ENCODE measurements at regions of chr5 and their contacts with region 1.

Region 1: GRCh38 chr5:122101636-122102285 is 23.7 kb upstream of the LOX start:
- DNase-seq: peak; percentile 23
- ATAC-seq: peak; percentile 77
- H3K4me3 ChIP-seq: no peak overlapping the region
- H3K27ac ChIP-seq: no peak overlapping the region
- H3K4me1 ChIP-seq: no peaks in the 10 kb centered on the region
- H3K27me3 ChIP-seq: no peaks in the 10 kb centered on the region
- CTCF ChIP-seq: peak; percentile 60
- EP300 ChIP-seq: no peak
- POLR2A ChIP-seq: no peak
- RAD21 ChIP-seq: no peak

Region 2: GRCh38 chr5:121630402-121630801 is 471.4 kb before region 1 on chr5:
- CTCF ChIA-PET with region 1: no interaction called
- POLR2A ChIA-PET with region 1: no interaction called
- in situ Hi-C with region 1: no loop called
- intact Hi-C with region 1: loop called (anchors 5 kb)
- DNase-seq: peak; percentile 18
- ATAC-seq: peak; percentile 85
- H3K4me3 ChIP-seq: no peak overlapping the region
- H3K27ac ChIP-seq: no peak overlapping the region
- H3K4me1 ChIP-seq: no peaks in the 10 kb centered on the region
- H3K27me3 ChIP-seq: no peaks in the 10 kb centered on the region
- CTCF ChIP-seq: peak; percentile 66
- EP300 ChIP-seq: no peak
- POLR2A ChIP-seq: no peak
- RAD21 ChIP-seq: no peak

Region 3: GRCh38 chr5:121681229-121681855 is 420.4 kb before region 1 on chr5:
- CTCF ChIA-PET with region 1: no interaction called
- POLR2A ChIA-PET with region 1: no interaction called
- in situ Hi-C with region 1: no loop called
- intact Hi-C with region 1: no loop called
- DNase-seq: no peak
- ATAC-seq: no peak
- H3K4me3 ChIP-seq: no peak overlapping the region
- H3K27ac ChIP-seq: no peak overlapping the region
- H3K4me1 ChIP-seq: no peaks in the 10 kb centered on the region
- H3K27me3 ChIP-seq: no peaks in the 10 kb centered on the region
- CTCF ChIP-seq: no peak
- EP300 ChIP-seq: no peak
- POLR2A ChIP-seq: no peak
- RAD21 ChIP-seq: no peak

Region 4: DNA sequence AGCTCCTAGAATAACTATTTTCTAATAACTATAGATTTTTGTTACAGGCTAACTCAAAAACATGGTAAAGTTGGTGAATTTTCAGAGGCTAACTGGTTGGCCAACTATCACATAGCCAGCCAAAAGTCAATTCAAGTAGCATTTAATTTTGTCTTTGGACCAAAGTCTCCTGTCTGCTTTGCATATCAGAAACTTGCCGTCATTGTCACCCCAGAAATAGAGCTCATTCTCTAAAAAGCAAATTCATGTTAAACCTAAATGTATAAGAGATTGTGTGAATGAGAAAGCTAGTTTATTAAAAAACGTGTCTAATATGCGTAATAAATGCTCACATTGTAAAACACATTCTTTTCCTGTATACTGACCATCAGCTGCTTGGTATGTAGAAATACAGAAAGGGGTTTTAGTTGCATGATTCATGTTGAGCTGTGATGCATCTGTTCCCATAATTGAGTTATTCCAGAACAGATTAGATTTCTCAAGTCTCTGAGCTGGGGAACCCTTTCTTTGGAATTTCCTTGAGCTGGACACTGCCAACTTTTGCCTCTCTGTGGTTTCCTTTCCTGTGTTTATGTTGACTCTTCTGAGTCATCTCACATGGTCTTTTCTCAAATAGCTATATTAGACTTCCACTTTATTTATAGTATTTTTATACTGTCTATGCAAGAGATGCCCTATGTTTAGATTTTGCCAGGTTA is 132.7 kb before region 1 on chr5:
- CTCF ChIA-PET with region 1: interaction called, 9 read pairs
- POLR2A ChIA-PET with region 1: no interaction called
- in situ Hi-C with region 1: loop called (anchors 10 kb)
- intact Hi-C with region 1: loop called (anchors 1 kb)
- DNase-seq: no peak
- ATAC-seq: no peak
- H3K4me3 ChIP-seq: no peak overlapping the region
- H3K27ac ChIP-seq: no peak overlapping the region
- H3K4me1 ChIP-seq: no peaks in the 10 kb centered on the region
- H3K27me3 ChIP-seq: no peaks in the 10 kb centered on the region
- CTCF ChIP-seq: no peak
- EP300 ChIP-seq: no peak
- POLR2A ChIP-seq: no peak
- RAD21 ChIP-seq: no peak

Region 5: DNA sequence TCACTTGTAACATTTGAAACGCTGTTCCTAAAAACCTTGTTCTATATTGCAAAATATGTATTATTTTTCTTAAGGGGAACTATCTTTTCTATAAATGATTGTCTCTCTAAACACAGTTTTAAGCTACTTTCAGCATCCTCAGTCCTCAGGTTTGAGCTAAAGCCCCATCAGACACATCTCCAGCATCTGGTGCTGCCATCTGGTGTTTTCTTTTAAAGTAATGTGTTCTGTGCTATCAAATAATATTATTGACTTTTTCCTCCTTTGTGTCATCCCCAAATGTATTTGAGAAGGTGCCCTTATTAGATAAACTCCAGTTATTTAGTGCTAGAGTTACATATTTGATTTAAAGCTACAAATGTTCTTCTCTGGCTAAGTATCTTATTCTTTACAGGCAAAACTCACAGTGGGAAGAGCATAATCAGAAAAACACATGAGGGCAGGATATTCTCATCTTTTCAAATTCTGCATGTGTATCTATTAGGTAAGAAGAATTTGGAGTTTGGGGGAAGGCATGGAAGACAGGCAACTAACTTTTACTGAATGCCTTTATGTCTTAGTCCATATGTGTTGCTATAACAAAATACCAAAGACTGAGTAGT is 55.1 kb after region 1 on chr5:
- CTCF ChIA-PET with region 1: no interaction called
- POLR2A ChIA-PET with region 1: no interaction called
- in situ Hi-C with region 1: no loop called
- intact Hi-C with region 1: loop called (anchors 1 kb)
- DNase-seq: peak; percentile 11
- ATAC-seq: peak; percentile 44; the same call in 1 of the 3 replicates
- H3K4me3 ChIP-seq: no peak overlapping the region
- H3K27ac ChIP-seq: no peak overlapping the region
- H3K4me1 ChIP-seq: no peaks in the 10 kb centered on the region
- H3K27me3 ChIP-seq: no peaks in the 10 kb centered on the region; a peak in 1 of 5 replicates
- CTCF ChIP-seq: peak; percentile 35; the same call in 1 of the 2 replicates
- EP300 ChIP-seq: no peak
- POLR2A ChIP-seq: no peak
- RAD21 ChIP-seq: no peak

Region 6: DNA sequence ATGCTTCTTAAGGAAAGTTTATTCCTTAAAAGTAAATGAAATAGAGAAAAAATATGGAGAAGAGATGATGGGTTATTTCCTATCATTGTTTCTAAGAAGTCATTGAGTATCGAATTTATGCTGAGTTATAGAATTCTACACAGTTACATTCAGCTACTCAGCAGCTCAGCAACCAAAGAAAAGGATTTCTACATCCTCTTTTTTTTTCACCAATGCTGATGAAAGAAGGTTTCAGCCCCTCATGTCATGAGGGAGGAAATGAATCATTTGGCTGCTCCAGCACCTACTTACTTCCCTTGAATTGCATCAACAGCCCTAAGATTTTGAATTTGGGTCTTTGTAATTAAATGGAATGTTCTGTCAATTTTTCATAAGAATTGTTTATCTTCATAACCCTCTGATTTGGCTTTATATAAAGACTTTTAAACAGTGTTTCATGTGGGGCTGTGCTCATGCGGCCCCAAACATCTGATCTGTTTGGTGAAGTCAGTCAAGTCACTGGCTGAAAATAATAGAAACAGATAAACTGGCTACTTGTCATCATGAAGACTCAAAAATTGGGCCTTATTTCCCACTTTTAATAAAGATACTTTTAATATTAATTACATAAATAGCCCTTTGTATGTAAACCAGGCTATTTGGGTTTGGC is 654.6 kb after region 1 on chr5:
- CTCF ChIA-PET with region 1: no interaction called
- POLR2A ChIA-PET with region 1: no interaction called
- in situ Hi-C with region 1: no loop called
- intact Hi-C with region 1: no loop called
- DNase-seq: no peak
- ATAC-seq: no peak
- H3K4me3 ChIP-seq: no peak overlapping the region
- H3K27ac ChIP-seq: no peak overlapping the region
- H3K4me1 ChIP-seq: no peaks in the 10 kb centered on the region
- H3K27me3 ChIP-seq: no peaks in the 10 kb centered on the region
- CTCF ChIP-seq: no peak
- EP300 ChIP-seq: no peak
- POLR2A ChIP-seq: no peak
- RAD21 ChIP-seq: no peak

Measured in HepG2 (cell line).